Endothelial cell of umbilical vein (primary cell): ENCODE measurements at regions of chr2 and their contacts with region 1.

Region 1: DNA sequence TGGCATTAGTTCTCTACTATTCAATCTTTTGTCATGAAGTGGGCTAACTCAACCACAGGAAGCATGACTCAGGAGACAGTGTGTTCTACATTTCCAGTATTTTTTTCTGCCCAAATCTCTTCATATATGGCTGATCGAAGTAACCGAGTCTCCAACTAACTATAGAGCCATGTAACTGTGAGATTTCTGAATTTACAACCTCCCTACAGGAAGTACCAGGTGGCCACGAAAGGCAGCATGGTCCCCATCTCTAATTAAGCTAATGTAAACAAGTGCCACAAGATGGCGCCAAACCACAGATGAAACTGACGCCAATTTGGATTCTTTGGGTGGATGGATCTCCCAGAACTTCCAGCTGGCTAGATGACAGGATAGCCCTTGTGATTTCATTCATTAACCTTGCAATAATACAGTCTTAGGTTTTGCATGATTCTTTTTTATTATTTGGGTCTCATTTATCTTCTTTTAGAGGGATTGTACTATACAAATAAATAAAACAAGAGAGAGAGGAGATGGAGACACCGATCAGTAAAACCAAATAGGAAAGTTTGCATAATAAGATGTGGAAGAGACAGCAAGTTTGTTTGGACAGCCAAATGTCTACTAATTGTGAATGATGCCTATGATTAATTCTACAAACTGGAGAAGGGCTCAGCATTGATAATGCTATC is 18.3 kb upstream of the ARHGAP15 start:
- DNase-seq: peak; percentile 63
- H3K4me3 ChIP-seq: no peak overlapping the region
- H3K27ac ChIP-seq: peak overlapping the region; percentile 41
- H3K4me1 ChIP-seq: peaks cover 3% of the 10 kb centered on the region
- H3K27me3 ChIP-seq: no peaks in the 10 kb centered on the region
- CTCF ChIP-seq: peak; percentile 66 to 70
- POLR2A ChIP-seq: no peak

Region 2: DNA sequence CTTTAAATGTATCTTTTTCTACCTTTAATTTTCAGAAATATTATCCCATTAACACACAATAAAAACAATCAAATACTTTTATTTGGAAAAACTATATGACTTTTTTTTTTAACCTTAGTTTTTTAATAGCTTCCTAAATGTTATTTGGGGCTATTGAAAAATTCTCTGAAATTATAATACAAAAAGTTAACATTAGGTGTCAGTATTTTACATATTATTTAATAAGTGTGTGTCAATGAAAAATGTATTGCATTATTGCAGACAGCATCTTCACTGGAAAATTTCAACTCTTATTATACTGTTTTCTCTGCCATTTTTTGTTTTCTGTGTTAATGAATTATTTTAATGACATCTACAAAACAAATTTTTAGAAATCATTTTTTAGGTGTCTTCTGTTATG is 32.8 kb before region 1 on chr2:
- CTCF ChIA-PET with region 1: interaction called, 12 read pairs
- POLR2A ChIA-PET with region 1: no interaction called
- dilution Hi-C with region 1: no loop called
- intact Hi-C with region 1: loop called (anchors 2 kb)
- DNase-seq: peak; percentile 2
- H3K4me3 ChIP-seq: no peak overlapping the region
- H3K27ac ChIP-seq: no peak overlapping the region
- H3K4me1 ChIP-seq: no peaks in the 10 kb centered on the region
- H3K27me3 ChIP-seq: no peaks in the 10 kb centered on the region
- CTCF ChIP-seq: no peak
- POLR2A ChIP-seq: no peak

Region 3: DNA sequence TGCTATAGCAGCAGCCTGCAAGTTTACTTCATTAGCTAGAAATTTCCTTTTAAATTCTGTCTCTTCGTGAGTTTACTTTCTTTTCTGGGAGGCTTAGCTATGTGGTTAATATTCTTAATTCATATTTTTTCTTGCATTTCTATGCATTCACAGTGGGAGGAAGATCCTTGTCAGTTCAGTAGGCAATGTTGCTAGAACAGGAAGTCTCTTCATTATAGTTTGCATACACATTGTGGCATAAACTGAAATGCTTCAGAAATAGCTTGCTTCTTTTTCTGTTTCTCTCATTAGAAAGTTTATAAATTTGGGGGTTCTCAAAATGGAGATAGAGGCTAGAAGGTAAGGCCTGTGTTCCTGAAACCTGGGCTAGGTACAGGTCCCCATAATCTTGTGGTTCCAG is 10.2 kb after region 1 on chr2:
- CTCF ChIA-PET with region 1: interaction called, 12 read pairs
- POLR2A ChIA-PET with region 1: no interaction called
- dilution Hi-C with region 1: no loop called
- intact Hi-C with region 1: no loop called
- DNase-seq: no peak
- H3K4me3 ChIP-seq: no peak overlapping the region
- H3K27ac ChIP-seq: no peak overlapping the region
- H3K4me1 ChIP-seq: no peaks in the 10 kb centered on the region
- H3K27me3 ChIP-seq: peaks cover 1 to 3% of the 10 kb centered on the region in 2 experiments
- CTCF ChIP-seq: no peak
- POLR2A ChIP-seq: no peak

Region 4: DNA sequence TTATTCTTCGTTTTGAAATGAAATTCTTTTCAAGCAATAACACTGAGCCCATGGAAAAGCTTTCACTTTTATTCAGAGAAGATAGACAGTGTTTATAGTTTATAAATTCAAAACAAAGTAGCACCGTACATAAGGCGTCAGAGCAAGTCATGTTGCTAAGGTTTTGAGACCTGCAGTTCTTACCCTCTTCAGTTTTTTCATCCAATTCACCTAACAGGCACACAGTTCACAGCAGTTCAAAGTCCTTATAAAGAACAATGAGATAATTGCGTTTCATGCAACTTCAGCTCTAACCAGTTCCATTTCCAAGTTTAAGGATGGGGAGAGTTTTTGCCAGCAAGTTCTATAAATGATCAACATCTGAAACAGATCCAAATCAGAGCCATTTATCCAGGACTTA is 115.0 kb after region 1 on chr2:
- CTCF ChIA-PET with region 1: interaction called, 40 read pairs
- POLR2A ChIA-PET with region 1: no interaction called
- dilution Hi-C with region 1: no loop called
- intact Hi-C with region 1: loop called (anchors 1 kb)
- DNase-seq: no peak
- H3K4me3 ChIP-seq: no peak overlapping the region
- H3K27ac ChIP-seq: no peak overlapping the region
- H3K4me1 ChIP-seq: no peaks in the 10 kb centered on the region
- H3K27me3 ChIP-seq: no peaks in the 10 kb centered on the region
- CTCF ChIP-seq: no peak
- POLR2A ChIP-seq: no peak

Region 5: DNA sequence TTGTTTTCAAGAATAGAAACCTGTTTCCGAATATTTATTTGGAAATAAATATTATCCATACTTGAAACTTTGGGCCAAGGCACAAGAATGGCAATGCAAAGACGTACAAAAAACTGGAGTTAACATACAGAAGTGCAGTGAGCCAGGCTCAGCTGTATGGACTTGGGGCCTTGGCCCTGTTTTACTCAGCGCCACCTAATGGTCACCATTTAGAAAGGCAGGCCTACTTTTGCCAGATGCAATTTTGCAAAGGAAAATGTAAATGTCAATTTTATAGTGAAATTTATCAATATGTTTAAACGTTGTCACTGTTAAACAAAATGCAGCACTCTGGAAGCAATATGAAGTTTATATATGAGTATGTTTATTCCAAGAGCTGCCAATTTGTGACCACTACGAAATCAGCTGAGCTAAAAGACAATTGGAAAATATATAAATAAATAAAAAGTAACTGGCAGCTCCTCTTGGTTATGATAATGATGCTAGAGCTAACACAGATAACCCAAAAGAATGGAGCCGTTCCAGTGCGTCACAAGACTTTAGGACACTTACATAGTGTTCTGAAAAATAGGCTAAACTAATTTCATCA is 173.3 kb after region 1 on chr2:
- CTCF ChIA-PET with region 1: interaction called, 11 read pairs
- POLR2A ChIA-PET with region 1: no interaction called
- dilution Hi-C with region 1: no loop called
- intact Hi-C with region 1: no loop called
- DNase-seq: peak; percentile 40
- H3K4me3 ChIP-seq: no peak overlapping the region
- H3K27ac ChIP-seq: no peak overlapping the region
- H3K4me1 ChIP-seq: no peaks in the 10 kb centered on the region
- H3K27me3 ChIP-seq: no peaks in the 10 kb centered on the region
- CTCF ChIP-seq: peak; percentile 78 to 84
- POLR2A ChIP-seq: no peak